Mammary epithelial cell (primary cell): ENCODE measurements at regions of chr10 and their contacts with region 1.

Region 1: GRCh38 chr10:112811740-112812551 is 138.1 kb upstream of the TCF7L2 start:
- DNase-seq: peak; percentile 93
- H3K4me3 ChIP-seq: peak overlapping the region in 1 of 3 experiments; percentile 22
- H3K27ac ChIP-seq: no peak overlapping the region
- H3K4me1 ChIP-seq: peaks cover 38% of the 10 kb centered on the region
- H3K27me3 ChIP-seq: no peaks in the 10 kb centered on the region
- CTCF ChIP-seq: no peak

Region 2: GRCh38 chr10:112565434-112566053 is 246.4 kb before region 1 on chr10:
- CTCF ChIA-PET with region 1: no interaction called
- dilution Hi-C with region 1: no loop called
- in situ Hi-C with region 1: no loop called
- intact Hi-C with region 1: loop called (anchors 10 kb)
- DNase-seq: peak; percentile 53
- H3K4me3 ChIP-seq: no peak overlapping the region
- H3K27ac ChIP-seq: no peak overlapping the region
- H3K4me1 ChIP-seq: no peaks in the 10 kb centered on the region
- H3K27me3 ChIP-seq: no peaks in the 10 kb centered on the region
- CTCF ChIP-seq: peak; percentile 77 to 82

Region 3: DNA sequence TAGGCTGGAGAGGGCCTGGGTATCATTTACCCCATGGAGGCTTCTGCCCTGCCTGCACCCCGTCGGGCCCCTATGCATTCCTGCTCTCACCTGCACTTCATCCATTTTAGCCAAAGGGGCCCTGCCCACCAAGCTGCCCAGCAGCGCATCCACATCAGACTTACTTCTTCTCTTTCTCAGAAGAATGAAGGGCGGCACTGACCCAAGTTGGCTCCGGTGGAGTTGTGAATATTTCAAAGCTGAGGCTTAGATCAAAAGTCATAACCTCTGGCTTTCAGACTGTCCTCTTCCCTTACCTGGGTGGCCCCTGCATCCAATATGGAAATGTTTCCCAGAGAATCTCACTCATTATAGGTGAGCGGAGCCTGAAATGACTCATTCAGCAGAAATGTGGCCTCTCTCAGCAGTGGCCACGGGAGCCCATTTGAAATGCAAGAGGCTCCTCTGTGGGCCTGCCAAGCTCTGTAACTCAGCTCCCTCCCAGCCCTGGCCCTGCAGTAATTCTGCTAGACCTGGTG is 20.5 kb after region 1 on chr10:
- CTCF ChIA-PET with region 1: no interaction called
- dilution Hi-C with region 1: no loop called
- in situ Hi-C with region 1: no loop called
- intact Hi-C with region 1: no loop called
- DNase-seq: peak; percentile 42
- H3K4me3 ChIP-seq: no peak overlapping the region
- H3K27ac ChIP-seq: no peak overlapping the region
- H3K4me1 ChIP-seq: peaks cover 7% of the 10 kb centered on the region
- H3K27me3 ChIP-seq: no peaks in the 10 kb centered on the region
- CTCF ChIP-seq: no peak

Region 4: GRCh38 chr10:112852306-112852705 is 40.4 kb after region 1 on chr10:
- CTCF ChIA-PET with region 1: no interaction called
- dilution Hi-C with region 1: no loop called
- in situ Hi-C with region 1: no loop called
- intact Hi-C with region 1: no loop called
- DNase-seq: no peak
- H3K4me3 ChIP-seq: no peak overlapping the region
- H3K27ac ChIP-seq: no peak overlapping the region
- H3K4me1 ChIP-seq: peaks cover 3% of the 10 kb centered on the region
- H3K27me3 ChIP-seq: peaks cover 3% of the 10 kb centered on the region
- CTCF ChIP-seq: no peak

Region 5: DNA sequence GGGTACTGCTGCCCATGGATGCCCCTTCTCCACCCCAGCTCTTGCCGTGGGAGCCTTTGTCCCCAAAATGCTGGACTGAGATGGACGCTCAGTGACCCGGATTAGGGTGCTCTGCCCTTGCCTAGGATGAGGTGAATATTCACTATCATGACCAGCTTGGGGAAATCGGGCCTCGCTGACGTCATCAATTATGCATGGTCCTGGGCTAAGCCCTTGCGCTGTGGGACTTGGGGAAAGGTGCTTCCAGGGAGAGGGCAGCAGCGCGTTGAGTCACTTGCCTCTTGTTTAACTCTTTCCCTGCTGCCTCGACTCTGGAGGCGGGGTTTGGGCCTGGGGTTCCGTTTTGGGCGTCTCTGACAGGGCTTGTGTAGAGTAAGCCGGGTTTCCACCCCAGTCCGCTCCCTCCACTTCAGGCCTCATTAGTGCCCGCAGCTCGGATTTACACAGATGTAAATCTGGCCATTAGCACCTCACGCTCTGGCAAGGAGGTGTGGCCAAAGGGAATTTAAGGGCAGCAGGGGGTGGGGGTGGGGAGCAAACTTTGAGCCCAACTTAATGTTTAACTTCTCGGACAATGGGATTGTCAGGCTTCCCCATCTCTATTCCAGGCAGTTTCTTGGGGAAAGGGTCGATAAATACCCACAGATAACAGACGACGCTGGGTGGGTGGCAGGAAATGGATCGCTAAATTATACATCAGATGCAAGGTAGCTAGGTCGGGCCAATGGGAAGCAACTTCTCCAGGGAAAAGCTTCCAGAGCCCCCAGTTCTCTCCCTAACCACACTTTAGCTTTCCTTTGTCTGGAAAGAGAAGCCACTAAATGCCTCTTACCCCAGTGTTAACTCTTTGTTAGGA is 86.8 kb after region 1 on chr10:
- CTCF ChIA-PET with region 1: no interaction called
- dilution Hi-C with region 1: loop called (anchors 5 kb)
- in situ Hi-C with region 1: no loop called
- intact Hi-C with region 1: no loop called
- DNase-seq: no peak
- H3K4me3 ChIP-seq: no peak overlapping the region
- H3K27ac ChIP-seq: no peak overlapping the region
- H3K4me1 ChIP-seq: peaks cover under 1% of the 10 kb centered on the region
- H3K27me3 ChIP-seq: no peaks in the 10 kb centered on the region
- CTCF ChIP-seq: no peak

Region 6: GRCh38 chr10:112915590-112916572 is 103.9 kb after region 1 on chr10:
- CTCF ChIA-PET with region 1: no interaction called
- dilution Hi-C with region 1: no loop called
- in situ Hi-C with region 1: no loop called
- intact Hi-C with region 1: no loop called
- DNase-seq: peak; percentile 61
- H3K4me3 ChIP-seq: no peak overlapping the region
- H3K27ac ChIP-seq: no peak overlapping the region
- H3K4me1 ChIP-seq: peaks cover 13% of the 10 kb centered on the region
- H3K27me3 ChIP-seq: no peaks in the 10 kb centered on the region
- CTCF ChIP-seq: no peak